Adrenal gland (tissue), 19 donors: ENCODE measurements at regions of chr15 and their contacts with region 1.

Region 1: GRCh38 chr15:72783563-72784237 is at the start of gene ADPGK:
- DNase-seq: peak; percentile 90 to 94 (median 92)
- H3K4me3 ChIP-seq: peak within 1 kb of the TSS; percentile 68 to 97 (median 92)
- H3K27ac ChIP-seq: peak within 1 kb of the TSS; percentile 66 to 98 (median 95)
- H3K4me1 ChIP-seq: peaks cover 0 to 36% of the 10 kb centered on the region in 2 donors
- H3K27me3 ChIP-seq: no peaks in the 10 kb centered on the region
- CTCF ChIP-seq: peak in 1 of 6 experiments; percentile 3
- POLR2A ChIP-seq: peak; percentile 86 to 92
- total RNA-seq, gene ADPGK: 27.7 to 97.1 (median 44.1) TPM

Region 2: GRCh38 chr15:72168111-72168808 is 615.4 kb before region 1 on chr15:
- intact Hi-C with region 1: no loop called
- DNase-seq: no peak
- H3K4me3 ChIP-seq: no peak overlapping the region
- H3K27ac ChIP-seq: no peak overlapping the region
- H3K4me1 ChIP-seq: no peaks in the 10 kb centered on the region
- H3K27me3 ChIP-seq: no peaks in the 10 kb centered on the region
- CTCF ChIP-seq: no peak
- POLR2A ChIP-seq: no peak

Region 3: GRCh38 chr15:72902245-72902918 is 118.7 kb after region 1 on chr15:
- intact Hi-C with region 1: no loop called
- DNase-seq: peak in 5 of 7 donors; percentile 23 to 67 (median 44)
- H3K4me3 ChIP-seq: no peak overlapping the region
- H3K27ac ChIP-seq: peak overlapping the region in 1 of 5 donors; percentile 52
- H3K4me1 ChIP-seq: no peaks in the 10 kb centered on the region
- H3K27me3 ChIP-seq: no peaks in the 10 kb centered on the region
- CTCF ChIP-seq: no peak
- POLR2A ChIP-seq: no peak

Region 4: DNA sequence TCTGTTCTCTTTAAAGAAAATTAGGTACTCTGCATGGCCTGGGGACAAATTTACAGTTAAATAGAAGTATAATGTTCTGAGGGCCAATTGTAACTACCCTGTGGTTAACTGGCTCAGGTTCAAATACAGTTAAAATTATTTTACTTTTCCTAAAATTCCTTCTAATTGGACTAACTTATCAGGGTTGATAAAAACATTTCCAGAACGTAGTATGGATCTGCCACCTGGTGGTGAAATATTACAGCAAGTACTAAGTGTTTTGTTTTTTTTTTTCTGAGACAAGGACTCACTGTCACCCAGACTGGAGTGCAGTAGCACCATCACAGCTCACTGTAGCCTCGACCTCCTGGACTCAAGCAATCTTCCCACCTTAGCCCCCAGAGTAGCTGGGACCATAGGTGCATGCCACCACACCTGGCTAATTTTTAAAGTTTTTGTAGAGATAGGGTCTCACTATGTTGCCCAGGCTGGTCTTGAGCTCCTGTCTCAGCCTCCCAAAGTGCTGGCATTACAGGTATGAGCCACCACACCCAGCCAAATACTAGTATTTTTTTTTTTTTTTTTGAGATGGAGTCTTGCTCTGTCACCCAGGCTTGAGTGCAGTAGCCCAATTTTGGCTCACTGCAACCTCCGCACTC is 297.7 kb after region 1 on chr15:
- intact Hi-C with region 1: loop called in 1 of 2 experiments (anchors 10 kb)
- DNase-seq: peak in 5 of 7 donors; percentile 15 to 48 (median 30)
- H3K4me3 ChIP-seq: no peak overlapping the region
- H3K27ac ChIP-seq: no peak overlapping the region
- H3K4me1 ChIP-seq: peaks cover 0 to 15% of the 10 kb centered on the region in 2 donors
- H3K27me3 ChIP-seq: no peaks in the 10 kb centered on the region
- CTCF ChIP-seq: peak; percentile 55 to 80 (median 68)
- POLR2A ChIP-seq: no peak